Esophagus muscularis mucosa (tissue), 4 donors: ENCODE measurements at regions of chr1 and their contacts with region 1.

Region 1: DNA sequence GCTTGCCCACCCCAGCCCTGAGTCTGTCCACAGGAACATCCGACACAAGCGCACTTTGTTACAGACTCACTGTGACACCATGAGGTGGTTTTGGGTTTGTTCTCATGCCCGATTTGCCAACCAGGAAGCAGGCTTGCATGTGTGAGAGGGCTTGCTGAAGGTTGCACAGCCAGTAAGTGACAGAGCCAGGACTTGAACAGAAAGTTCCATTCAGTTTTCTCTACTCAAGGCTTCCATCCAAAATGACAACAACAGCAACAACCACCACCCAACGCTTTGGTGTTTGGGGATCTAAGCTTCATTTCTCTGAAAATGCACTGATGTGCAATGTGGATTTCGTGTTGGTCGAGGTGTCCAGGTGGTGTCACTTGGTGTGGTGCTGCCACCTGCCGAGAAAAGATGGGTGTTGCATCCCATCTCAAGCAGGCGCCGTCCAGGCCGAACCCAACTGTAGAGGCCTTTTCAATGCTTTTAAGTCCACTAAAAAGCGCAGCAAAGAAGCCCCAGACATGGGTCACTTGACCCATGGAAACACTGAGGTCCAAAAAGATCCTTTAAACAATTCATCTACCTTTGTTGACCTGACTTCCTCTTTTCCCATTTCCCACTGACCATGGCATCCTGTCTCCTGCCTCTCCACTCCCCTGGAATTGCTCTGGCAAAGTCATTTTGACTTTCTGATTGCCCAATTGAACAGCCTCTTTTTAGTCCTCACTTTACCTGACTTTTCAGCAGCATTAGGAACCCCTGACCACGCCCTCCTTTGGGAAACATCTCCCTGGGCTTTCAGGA is 12.2 kb downstream of the CITED4 start:
- DNase-seq: peak; percentile 94
- H3K4me3 ChIP-seq: no peak overlapping the region
- H3K27ac ChIP-seq: no peak overlapping the region
- H3K4me1 ChIP-seq: peaks cover 0 to 23% (median 11%) of the 10 kb centered on the region in 4 donors
- H3K27me3 ChIP-seq: no peaks in the 10 kb centered on the region
- CTCF ChIP-seq: peak; percentile 87 to 94 (median 94)
- EP300 ChIP-seq: no peak
- POLR2A ChIP-seq: no peak

Region 2: DNA sequence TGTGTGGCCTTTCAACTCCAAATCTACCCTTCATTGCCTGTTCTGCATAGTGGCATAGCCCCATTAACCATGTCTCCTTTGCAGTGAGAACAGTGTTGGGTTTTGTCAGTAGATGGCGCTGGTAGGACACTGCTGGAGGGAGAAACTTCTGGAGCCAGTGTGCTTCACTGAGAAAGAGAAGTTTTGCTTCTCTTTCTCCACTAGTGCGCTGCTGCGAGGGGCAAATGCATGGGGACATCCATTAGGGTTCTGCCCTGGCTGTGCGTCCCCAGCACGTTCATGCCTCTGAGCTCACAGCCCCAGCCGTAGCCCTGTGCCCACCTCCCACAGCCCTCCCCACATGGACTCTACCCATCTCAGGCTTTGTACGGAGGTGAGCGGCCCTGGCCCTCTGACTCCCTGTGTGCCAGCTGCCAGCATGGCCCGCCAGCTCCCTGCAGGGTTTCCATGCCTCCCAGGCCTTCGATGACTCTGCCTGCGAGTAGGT is 237.6 kb before region 1 on chr1:
- intact Hi-C with region 1: loop called (anchors 2 kb)
- DNase-seq: no peak
- H3K4me3 ChIP-seq: no peak overlapping the region
- H3K27ac ChIP-seq: no peak overlapping the region
- H3K4me1 ChIP-seq: peaks cover 0 to 5% (median 4%) of the 10 kb centered on the region in 4 donors
- H3K27me3 ChIP-seq: no peaks in the 10 kb centered on the region
- CTCF ChIP-seq: peak; percentile 71 to 81 (median 81)
- EP300 ChIP-seq: no peak
- POLR2A ChIP-seq: no peak

Region 3: DNA sequence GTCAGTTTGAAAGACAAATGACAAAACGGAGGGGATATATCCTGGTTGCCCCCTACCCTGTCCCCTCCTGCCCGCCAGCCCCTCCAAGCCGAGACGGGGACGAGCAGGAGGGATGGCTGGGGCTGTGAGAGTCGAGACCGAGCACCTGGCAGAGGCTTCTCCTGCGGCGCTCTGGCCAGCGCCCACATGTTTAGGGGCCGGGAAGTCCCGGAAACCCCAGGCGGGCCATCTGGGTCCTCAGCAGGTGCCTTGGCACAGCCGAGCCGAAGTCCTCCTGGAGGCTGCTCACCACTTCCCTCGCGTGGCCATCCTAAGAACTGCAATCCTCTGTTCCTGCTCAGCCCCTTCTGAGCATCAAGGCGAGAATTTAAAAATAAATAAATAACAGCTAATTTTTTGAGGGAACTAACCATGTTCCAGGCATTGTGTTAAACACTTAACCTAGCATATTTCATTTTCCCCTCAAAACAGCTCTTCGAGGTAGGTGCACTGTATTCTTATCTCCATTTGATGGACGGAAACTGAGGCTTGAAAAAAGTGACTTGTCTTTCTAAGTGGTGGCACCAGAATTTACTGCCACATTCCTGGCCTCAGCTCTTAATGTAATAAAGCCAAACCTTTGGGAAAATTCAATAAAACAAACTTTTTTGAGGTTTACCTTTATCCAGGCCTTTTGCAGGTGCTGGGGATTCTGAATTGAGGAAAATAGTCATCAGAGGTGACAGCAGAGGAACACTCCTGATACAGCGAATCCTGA is 181.1 kb before region 1 on chr1:
- intact Hi-C with region 1: loop called (anchors 5 kb)
- DNase-seq: no peak
- H3K4me3 ChIP-seq: peak overlapping the region; percentile 17 to 48 (median 31)
- H3K27ac ChIP-seq: no peak overlapping the region
- H3K4me1 ChIP-seq: peaks cover 11 to 37% (median 33%) of the 10 kb centered on the region in 4 donors
- H3K27me3 ChIP-seq: no peaks in the 10 kb centered on the region
- CTCF ChIP-seq: peak; percentile 91 to 99 (median 94)
- EP300 ChIP-seq: no peak
- POLR2A ChIP-seq: no peak

Region 4: GRCh38 chr1:40774266-40774998 is 75.6 kb before region 1 on chr1:
- intact Hi-C with region 1: loop called (anchors 2 kb)
- DNase-seq: no peak
- H3K4me3 ChIP-seq: no peak overlapping the region
- H3K27ac ChIP-seq: peak overlapping the region in 2 of 4 donors; percentile 10 to 46
- H3K4me1 ChIP-seq: peaks cover under 1 to 26% (median 24%) of the 10 kb centered on the region in 4 donors
- H3K27me3 ChIP-seq: no peaks in the 10 kb centered on the region
- CTCF ChIP-seq: peak; percentile 78 to 87 (median 82)
- EP300 ChIP-seq: no peak
- POLR2A ChIP-seq: no peak

Region 5: DNA sequence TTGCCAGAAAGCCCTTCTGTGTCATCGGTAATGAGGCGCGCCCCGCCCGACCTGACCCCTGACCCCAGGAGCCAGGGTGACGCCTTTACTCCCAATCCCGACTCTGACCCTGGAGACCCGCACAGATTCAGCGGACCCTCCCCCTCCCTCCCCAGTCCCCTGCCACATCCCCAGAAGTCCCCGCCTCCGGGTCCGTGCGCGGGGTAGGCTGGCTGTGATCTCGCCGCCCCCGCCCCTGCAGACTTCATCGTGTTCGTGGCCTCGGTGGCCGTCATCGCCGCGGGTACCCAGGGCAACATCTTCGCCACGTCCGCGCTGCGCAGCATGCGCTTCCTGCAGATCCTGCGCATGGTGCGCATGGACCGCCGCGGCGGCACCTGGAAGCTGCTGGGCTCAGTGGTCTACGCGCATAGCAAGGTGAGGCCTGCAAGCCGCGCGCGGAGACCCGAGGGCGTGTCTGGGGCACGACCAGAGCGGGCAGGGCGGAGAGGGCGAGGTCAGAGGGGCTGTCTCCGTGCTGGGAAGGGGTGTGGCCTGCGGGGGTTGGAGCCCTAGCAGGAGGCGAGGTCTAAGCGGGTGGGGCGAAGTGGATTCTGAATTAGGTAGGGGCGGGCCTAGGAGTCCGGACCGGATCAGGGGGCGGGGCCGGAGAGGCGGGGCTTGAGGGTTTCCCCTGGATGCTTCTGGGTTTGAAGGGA is 31.6 kb before region 1 on chr1:
- intact Hi-C with region 1: no loop called
- DNase-seq: no peak
- H3K4me3 ChIP-seq: peak overlapping the region; percentile 33 to 57 (median 39)
- H3K27ac ChIP-seq: no peak overlapping the region
- H3K4me1 ChIP-seq: peaks cover 7 to 66% (median 40%) of the 10 kb centered on the region in 4 donors
- H3K27me3 ChIP-seq: no peaks in the 10 kb centered on the region
- CTCF ChIP-seq: no peak
- EP300 ChIP-seq: no peak
- POLR2A ChIP-seq: no peak

Region 6: DNA sequence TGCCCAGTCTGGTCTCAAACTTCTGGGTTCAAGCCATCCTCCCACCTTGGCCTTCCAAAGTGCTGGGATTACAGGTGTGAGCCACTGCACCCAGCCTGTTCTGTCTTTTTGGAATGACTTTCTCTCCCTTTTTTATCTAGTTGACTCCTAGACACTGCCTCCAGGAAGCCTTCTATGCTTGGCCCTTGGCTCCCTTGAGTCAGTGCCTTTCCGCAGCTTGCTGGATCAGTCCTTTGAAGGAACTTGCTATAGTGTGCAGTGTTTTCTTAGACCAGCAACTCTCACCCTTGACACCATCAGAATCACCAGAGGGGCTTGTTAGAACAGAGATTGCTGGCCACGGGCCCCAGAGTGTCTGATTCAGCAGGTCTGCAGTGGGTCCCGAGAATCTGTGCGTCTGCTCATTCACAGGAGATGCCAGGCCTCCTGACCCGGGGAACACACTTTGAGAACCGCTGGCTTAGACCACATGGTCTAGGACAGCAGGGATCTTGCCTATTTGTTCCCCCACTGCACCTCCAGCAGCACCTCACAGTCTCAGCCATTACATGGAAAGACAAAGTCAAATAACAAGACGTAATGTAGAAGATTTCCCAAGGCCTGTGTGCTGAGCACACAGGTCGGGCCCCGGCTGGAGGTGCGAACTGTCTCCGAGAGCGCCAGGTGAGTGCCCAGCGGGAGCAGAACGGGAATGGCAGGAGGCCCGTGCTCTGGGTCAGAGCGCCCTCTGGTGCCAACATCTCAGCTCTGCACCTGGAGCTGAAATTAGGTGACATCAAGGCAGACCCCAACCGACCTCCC is 102.1 kb after region 1 on chr1:
- intact Hi-C with region 1: loop called (anchors 2 kb)
- DNase-seq: no peak
- H3K4me3 ChIP-seq: no peak overlapping the region
- H3K27ac ChIP-seq: no peak overlapping the region
- H3K4me1 ChIP-seq: peaks cover 0 to 17% (median 11%) of the 10 kb centered on the region in 4 donors
- H3K27me3 ChIP-seq: peaks cover 0 to 9% (median 0%) of the 10 kb centered on the region in 4 donors
- CTCF ChIP-seq: peak; percentile 90 to 95 (median 91)
- EP300 ChIP-seq: no peak
- POLR2A ChIP-seq: no peak